ENCODE measurements at regions of chr1 and their contacts with region 1.

Region 1: GRCh38 chr1:205919026-205919746 is 24.1 kb downstream of the SLC26A9 start:
- DNase-seq: peak; percentile 89
- ATAC-seq: peak; percentile 96
- H3K4me3 Mint-ChIP-seq: no peak overlapping the region
- H3K27ac Mint-ChIP-seq: no peak overlapping the region
- H3K4me1 Mint-ChIP-seq: peaks cover 6% of the 10 kb centered on the region
- H3K27me3 Mint-ChIP-seq: no peaks in the 10 kb centered on the region
- CTCF ChIP-seq: peak; percentile 90

Region 2: GRCh38 chr1:205791568-205792180 is 127.5 kb before region 1 on chr1:
- CTCF ChIA-PET with region 1: interaction called, 22 read pairs
- POLR2A ChIA-PET with region 1: no interaction called
- DNase-seq: peak; percentile 70
- ATAC-seq: peak; percentile 96
- H3K4me3 Mint-ChIP-seq: no peak overlapping the region
- H3K27ac Mint-ChIP-seq: no peak overlapping the region
- H3K4me1 Mint-ChIP-seq: 0 out of 2 replicates have a peak, but pooled peaks cover 6% of the 10 kb centered on the region
- H3K27me3 Mint-ChIP-seq: no peaks in the 10 kb centered on the region
- CTCF ChIP-seq: peak; percentile 73

Region 3: GRCh38 chr1:205907794-205908193 is 11.4 kb before region 1 on chr1:
- CTCF ChIA-PET with region 1: interaction called, 13 read pairs
- POLR2A ChIA-PET with region 1: no interaction called
- DNase-seq: peak; percentile 57
- ATAC-seq: peak; percentile 92
- H3K4me3 Mint-ChIP-seq: no peak overlapping the region
- H3K27ac Mint-ChIP-seq: no peak overlapping the region
- H3K4me1 Mint-ChIP-seq: peaks cover 3% of the 10 kb centered on the region
- H3K27me3 Mint-ChIP-seq: no peaks in the 10 kb centered on the region; the same call in none of the 2 replicates
- CTCF ChIP-seq: peak; percentile 28; the same call in 1 of the 2 replicates

Region 4: GRCh38 chr1:205939690-205940330 is 20.6 kb after region 1 on chr1:
- CTCF ChIA-PET with region 1: interaction called, 15 read pairs
- POLR2A ChIA-PET with region 1: no interaction called
- DNase-seq: peak; percentile 79
- ATAC-seq: peak; percentile 96
- H3K4me3 Mint-ChIP-seq: peak overlapping the region; percentile 25; the same call in 1 of the 2 replicates
- H3K27ac Mint-ChIP-seq: no peak overlapping the region
- H3K4me1 Mint-ChIP-seq: peaks cover 27% of the 10 kb centered on the region
- H3K27me3 Mint-ChIP-seq: peaks cover 4% of the 10 kb centered on the region
- CTCF ChIP-seq: peak; percentile 48; the same call in 1 of the 2 replicates

Region 5: GRCh38 chr1:205950280-205950679 is 31.1 kb after region 1 on chr1:
- CTCF ChIA-PET with region 1: interaction called, 21 read pairs
- POLR2A ChIA-PET with region 1: no interaction called
- DNase-seq: no peak
- ATAC-seq: no peak
- H3K4me3 Mint-ChIP-seq: no peak overlapping the region
- H3K27ac Mint-ChIP-seq: no peak overlapping the region
- H3K4me1 Mint-ChIP-seq: peaks cover 19% of the 10 kb centered on the region
- H3K27me3 Mint-ChIP-seq: no peaks in the 10 kb centered on the region; the same call in 1 of the 2 replicates
- CTCF ChIP-seq: no peak

Region 6: DNA sequence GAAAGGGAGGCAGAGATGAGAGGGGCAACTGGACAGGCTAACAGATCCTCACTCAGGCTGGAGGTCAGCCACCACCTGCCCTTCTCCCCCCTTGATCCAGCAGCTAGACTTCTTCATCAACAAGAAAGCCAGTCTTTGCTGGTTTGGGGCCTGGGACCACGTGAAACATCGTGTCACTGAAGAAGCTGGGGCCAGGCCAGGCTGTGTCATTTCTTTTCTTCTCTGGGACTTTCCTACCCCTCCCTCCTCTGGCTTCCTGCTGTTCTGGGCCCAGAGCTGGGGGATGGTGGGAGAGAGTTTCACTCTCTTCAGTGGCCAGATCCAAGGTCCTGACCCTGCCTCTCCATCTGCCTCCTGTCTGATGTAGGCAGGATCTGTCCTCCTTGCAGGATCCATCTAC is 42.2 kb after region 1 on chr1:
- CTCF ChIA-PET with region 1: interaction called, 12 read pairs
- POLR2A ChIA-PET with region 1: no interaction called
- DNase-seq: no peak
- ATAC-seq: no peak
- H3K4me3 Mint-ChIP-seq: no peak overlapping the region
- H3K27ac Mint-ChIP-seq: no peak overlapping the region
- H3K4me1 Mint-ChIP-seq: peaks cover 9% of the 10 kb centered on the region
- H3K27me3 Mint-ChIP-seq: no peaks in the 10 kb centered on the region; the same call in 1 of the 2 replicates
- CTCF ChIP-seq: no peak

Region 7: DNA sequence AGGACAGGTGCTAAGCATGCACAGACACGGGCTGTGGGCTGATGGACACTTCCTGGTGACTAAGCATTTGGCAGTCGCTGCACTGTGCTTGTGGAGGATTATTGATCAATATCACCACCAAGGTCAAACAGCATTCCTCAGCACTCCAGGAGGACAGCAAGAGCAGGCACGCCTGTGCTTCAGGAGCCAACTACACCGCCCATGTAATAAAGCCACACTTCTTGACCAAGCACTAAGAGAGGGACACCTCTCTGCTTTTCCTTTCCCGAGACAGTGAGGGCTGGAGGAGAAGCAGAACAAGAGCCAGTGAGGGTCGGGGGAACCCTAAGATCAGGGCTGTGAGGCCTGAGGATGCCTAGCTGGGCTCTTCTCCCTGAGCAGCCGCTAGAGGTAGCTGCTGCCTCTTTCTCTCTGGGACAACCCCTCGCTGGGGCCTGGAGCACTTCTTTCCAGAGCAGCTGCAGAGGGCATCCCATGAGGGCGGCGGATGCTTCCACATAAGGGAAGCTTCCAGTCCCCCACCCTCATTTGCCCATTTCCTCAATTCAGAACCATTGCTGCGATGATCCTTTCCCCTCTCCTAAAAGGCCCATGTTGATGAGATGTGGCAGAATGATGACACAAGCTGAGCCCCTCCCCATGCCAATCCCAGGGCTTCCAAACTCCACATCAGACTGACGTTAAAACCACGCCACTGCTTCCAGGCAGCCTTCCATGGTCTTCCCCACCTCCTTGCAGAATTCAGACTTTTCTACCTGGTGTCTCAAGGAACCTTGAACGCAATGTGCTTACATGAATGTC is 64.9 kb after region 1 on chr1:
- CTCF ChIA-PET with region 1: interaction called, 557 read pairs
- POLR2A ChIA-PET with region 1: no interaction called
- DNase-seq: peak; percentile 77
- ATAC-seq: peak; percentile 93
- H3K4me3 Mint-ChIP-seq: no peak overlapping the region
- H3K27ac Mint-ChIP-seq: no peak overlapping the region
- H3K4me1 Mint-ChIP-seq: 0 out of 2 replicates have a peak, but pooled peaks cover 4% of the 10 kb centered on the region
- H3K27me3 Mint-ChIP-seq: no peaks in the 10 kb centered on the region; the same call in 1 of the 2 replicates
- CTCF ChIP-seq: peak; percentile 26; the same call in 1 of the 2 replicates